Activated B cell treated with CpG ODN at 0.5 μM for 24 hours (primary cell): ENCODE measurements at regions of chr14 and their contacts with region 1.

Region 1: GRCh38 chr14:53152890-53153701 is at the start of gene DDHD1:
- DNase-seq: peak; percentile 92
- ATAC-seq: peak; percentile 86
- H3K4me3 Mint-ChIP-seq: peak within 1 kb of the TSS; percentile 98
- H3K27ac Mint-ChIP-seq: peak within 1 kb of the TSS; percentile 98
- H3K4me1 Mint-ChIP-seq: peaks cover 48% of the 10 kb centered on the region
- H3K27me3 Mint-ChIP-seq: no peaks in the 10 kb centered on the region
- CTCF ChIP-seq: no peak
- total RNA-seq, gene DDHD1: 44.0 and 59.8 TPM in 2 replicates

Region 2: GRCh38 chr14:52325126-52325525 is 828.0 kb before region 1 on chr14:
- CTCF ChIA-PET with region 1: no interaction called
- POLR2A ChIA-PET with region 1: interaction called, 3 read pairs
- intact Hi-C with region 1: loop called (anchors 5 kb)
- DNase-seq: no peak
- ATAC-seq: peak; percentile 96
- H3K4me3 Mint-ChIP-seq: peak overlapping the region; percentile 33
- H3K27ac Mint-ChIP-seq: peak overlapping the region; percentile 32
- H3K4me1 Mint-ChIP-seq: peaks cover 28% of the 10 kb centered on the region
- H3K27me3 Mint-ChIP-seq: peaks cover 16% of the 10 kb centered on the region
- CTCF ChIP-seq: no peak

Region 3: GRCh38 chr14:52791203-52792096 is 361.6 kb before region 1 on chr14 and contains the start of gene GNPNAT1:
- CTCF ChIA-PET with region 1: no interaction called
- POLR2A ChIA-PET with region 1: no interaction called
- intact Hi-C with region 1: loop called (anchors 1 kb)
- DNase-seq: peak; percentile 79
- ATAC-seq: peak; percentile 96
- H3K4me3 Mint-ChIP-seq: peak within 1 kb of the TSS; percentile 91
- H3K27ac Mint-ChIP-seq: peak within 1 kb of the TSS; percentile 77
- H3K4me1 Mint-ChIP-seq: peaks cover 27% of the 10 kb centered on the region
- H3K27me3 Mint-ChIP-seq: no peaks in the 10 kb centered on the region
- CTCF ChIP-seq: no peak
- total RNA-seq, gene GNPNAT1: 9.7 and 11.4 TPM in 2 replicates

Region 4: DNA sequence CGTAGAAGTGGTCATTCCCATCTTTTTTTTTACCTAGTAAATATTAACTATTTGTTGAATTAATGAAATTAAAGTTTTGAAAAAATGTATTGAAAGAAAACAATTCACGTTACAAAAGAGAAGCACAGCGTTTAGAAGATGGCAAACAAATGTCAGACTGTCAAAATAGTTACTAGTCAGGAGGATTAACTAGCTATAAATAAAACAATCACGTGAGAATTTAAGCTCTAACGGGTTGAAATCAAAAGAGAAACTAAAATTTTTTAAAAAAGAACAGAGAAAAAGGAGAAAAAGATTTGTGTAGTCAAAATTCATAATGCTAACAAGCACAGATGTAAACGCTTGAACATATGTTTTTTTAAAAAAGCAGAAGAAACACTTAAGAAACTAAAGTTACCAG is 26.4 kb before region 1 on chr14:
- CTCF ChIA-PET with region 1: interaction called, 3 read pairs
- POLR2A ChIA-PET with region 1: interaction called, 11 read pairs
- intact Hi-C with region 1: loop called (anchors 2 kb)
- DNase-seq: no peak
- ATAC-seq: peak; percentile 33
- H3K4me3 Mint-ChIP-seq: peak overlapping the region; percentile 76
- H3K27ac Mint-ChIP-seq: peak overlapping the region; percentile 87
- H3K4me1 Mint-ChIP-seq: peaks cover 18% of the 10 kb centered on the region
- H3K27me3 Mint-ChIP-seq: no peaks in the 10 kb centered on the region
- CTCF ChIP-seq: no peak

Region 5: DNA sequence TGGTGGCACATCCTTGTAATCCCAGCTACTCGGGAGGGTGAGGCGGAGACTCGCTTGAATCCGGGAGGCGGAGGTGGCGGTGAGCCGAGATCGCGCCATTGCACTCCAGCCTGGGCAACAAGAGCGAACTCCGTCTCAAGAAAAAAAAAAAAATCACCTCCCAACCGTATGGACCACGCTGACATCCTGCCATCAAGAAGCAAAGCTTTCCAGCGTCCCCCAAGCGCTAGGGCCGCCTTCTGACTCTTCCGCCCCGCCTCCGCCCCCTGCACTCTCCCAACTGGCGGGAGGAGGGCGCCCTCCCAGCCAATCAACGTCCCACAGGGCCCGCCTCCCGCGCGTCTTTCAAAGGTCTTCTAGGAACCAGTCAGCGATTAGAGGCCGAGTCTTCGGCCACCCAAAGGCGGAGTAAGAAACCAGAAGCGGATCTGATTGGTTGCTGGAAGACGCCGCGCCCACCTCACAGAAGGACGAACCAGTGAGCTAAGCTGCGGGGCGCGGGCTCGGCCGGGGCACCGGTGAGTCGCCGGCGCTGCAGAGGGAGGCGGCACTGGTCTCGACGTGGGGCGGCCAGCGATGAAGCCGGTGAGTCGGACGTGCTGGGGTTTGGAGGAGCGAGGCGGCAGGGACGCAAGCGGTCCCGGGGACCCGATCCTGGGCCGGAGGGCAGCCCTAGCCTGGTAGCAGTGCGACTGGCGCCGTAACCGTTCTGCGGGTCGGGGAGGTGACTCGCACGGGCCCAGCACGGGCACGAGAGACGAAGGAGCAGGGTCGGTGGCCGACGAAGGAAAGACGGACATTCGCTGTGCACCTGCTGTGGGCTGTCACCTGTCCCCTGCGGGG is 1243.6 kb after region 1 on chr14 and contains the start of gene CDKN3:
- CTCF ChIA-PET with region 1: no interaction called
- POLR2A ChIA-PET with region 1: interaction called, 4 read pairs
- intact Hi-C with region 1: loop called (anchors 5 kb)
- DNase-seq: peak; percentile 94
- ATAC-seq: peak; percentile 94
- H3K4me3 Mint-ChIP-seq: peak within 1 kb of the TSS; percentile 86
- H3K27ac Mint-ChIP-seq: peak within 1 kb of the TSS; percentile 82
- H3K4me1 Mint-ChIP-seq: peaks cover 23% of the 10 kb centered on the region
- H3K27me3 Mint-ChIP-seq: no peaks in the 10 kb centered on the region
- CTCF ChIP-seq: no peak
- total RNA-seq, gene CDKN3: 0.91 and 1.6 TPM in 2 replicates